Activated T-helper 1 cell treated with anti-CD3 and anti-CD28 coated beads, Interleukin-12 subunit alpha, Interleukin-12 subunit beta, Interleukin-2, Interleukin-4 antibody, amounts not matched to agents 30 ng/mL and 10 ng/mL and 1 ng/mL, durations not matched to agents 14 hours and 24 hours and 36 hours (primary cell): ENCODE measurements at regions of chr16 and their contacts with region 1.

Region 1: DNA sequence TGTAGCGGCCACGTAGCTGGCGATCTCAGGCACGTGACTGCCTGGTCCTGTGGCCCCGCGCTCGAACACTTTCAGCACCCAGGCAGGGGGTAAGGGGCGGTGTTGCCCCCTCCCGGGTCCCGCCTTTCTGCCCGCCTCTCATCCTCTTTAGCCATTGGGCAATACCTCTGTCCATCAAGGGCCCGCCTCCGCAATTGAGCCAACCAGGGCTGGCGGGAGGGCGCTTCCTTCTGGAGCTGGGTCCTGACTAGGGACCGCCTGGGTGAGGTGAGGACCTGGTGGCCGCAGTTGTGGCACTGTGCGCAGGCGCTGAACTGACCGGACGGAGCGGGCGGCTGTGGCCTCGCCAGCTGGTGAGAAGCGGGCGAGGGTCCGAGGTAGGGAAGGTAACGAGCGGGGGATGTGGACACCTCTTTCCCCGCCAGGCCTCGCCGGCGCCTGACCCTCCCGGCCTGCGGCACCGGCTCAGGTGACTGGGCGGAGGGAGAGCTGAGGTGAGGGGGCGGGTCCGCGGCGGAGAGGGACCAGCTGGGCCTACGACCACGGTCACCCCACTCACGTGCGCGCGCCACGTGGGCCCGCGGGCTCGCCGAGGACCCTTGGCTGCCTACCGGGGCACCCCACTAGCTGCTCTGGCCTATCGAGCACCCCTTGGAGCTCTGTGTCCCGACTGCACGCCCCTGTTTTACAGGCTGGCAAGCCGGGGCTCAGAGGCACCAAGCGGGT is at the start of gene PDP2:
- DNase-seq: peak; percentile 92
- H3K4me3 Mint-ChIP-seq: peak within 1 kb of the TSS; percentile 98
- H3K27ac Mint-ChIP-seq: peak within 1 kb of the TSS; percentile 95
- H3K4me1 Mint-ChIP-seq: peaks cover 51% of the 10 kb centered on the region
- H3K27me3 Mint-ChIP-seq: no peaks in the 10 kb centered on the region
- total RNA-seq, gene PDP2: 43.3 and 52.2 TPM in 2 replicates

Region 2: DNA sequence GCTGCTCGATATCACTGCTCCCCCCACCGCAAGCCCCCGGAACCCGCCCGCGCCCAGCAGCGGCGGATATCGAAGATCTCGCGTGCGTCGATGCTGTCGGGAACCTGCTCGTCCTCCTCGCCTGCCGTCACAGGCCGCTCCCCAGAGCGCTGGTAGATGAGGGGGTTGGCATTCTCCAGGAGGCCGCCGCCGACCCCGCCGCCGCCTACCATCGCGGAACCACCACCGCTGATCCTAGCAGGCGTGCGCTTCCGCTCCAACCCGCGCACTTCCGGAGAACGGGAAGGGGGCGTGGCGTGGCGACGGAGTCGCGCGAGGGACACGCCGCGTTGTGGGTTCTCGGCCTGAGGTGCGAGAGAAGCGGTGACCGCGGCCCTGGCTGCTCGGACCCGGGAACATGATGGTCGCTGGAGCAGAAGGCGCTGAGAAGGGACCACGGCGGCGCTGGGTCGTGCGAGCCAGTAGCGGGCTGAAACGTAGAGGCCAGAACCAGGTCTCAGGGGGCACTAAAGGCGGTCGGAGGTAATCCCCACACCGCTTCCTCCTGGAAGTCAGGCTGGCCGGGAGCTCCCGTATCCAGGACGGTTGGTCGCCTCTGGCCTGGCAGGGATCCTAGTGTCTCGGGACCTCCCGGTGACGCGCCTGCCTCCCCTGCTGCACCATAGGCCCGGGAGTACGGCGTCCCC is 53.8 kb after region 1 on chr16 and contains the start of gene CIAO2B:
- intact Hi-C with region 1: loop called (anchors 1 kb)
- DNase-seq: peak; percentile 88
- H3K4me3 Mint-ChIP-seq: peak within 1 kb of the TSS; percentile 96
- H3K27ac Mint-ChIP-seq: peak within 1 kb of the TSS; percentile 87
- H3K4me1 Mint-ChIP-seq: peaks cover 53% of the 10 kb centered on the region
- H3K27me3 Mint-ChIP-seq: no peaks in the 10 kb centered on the region
- total RNA-seq, gene CIAO2B: 162 and 164 TPM in 2 replicates